ENCODE measurements at regions of chr11 and their contacts with region 1.

Region 1: DNA sequence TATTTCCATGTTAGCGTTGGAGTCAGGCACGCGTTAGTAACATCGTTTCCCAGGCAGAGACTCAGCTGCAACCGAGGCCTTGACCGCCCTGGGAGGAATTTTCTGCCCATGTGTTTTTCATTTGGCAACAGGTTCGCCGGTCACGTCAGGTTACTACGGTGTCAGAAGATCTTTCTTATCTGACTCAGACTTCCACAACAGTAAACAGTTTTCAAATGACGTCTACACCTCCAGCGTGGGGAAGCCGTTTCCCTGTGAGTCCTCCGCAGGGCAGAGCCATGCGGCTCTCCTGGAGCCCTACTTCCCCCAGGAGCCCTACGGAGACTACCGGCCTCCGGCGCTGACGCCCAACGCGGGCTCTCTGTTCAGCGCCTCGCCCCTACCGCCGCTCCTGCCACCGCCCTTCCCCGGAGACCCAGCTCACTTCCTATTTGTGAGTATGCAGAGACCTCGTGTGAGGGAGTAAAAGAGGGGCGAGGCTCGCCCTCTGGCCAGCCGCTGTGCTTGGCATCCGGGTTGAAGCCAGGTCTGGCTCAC is 14.3 kb upstream of the POU2AF3 start:
- DNase-seq: no peak
- H3K4me3 Mint-ChIP-seq: no peak overlapping the region
- H3K27ac Mint-ChIP-seq: no peak overlapping the region
- H3K4me1 Mint-ChIP-seq: no peaks in the 10 kb centered on the region
- H3K27me3 Mint-ChIP-seq: no peaks in the 10 kb centered on the region

Region 2: DNA sequence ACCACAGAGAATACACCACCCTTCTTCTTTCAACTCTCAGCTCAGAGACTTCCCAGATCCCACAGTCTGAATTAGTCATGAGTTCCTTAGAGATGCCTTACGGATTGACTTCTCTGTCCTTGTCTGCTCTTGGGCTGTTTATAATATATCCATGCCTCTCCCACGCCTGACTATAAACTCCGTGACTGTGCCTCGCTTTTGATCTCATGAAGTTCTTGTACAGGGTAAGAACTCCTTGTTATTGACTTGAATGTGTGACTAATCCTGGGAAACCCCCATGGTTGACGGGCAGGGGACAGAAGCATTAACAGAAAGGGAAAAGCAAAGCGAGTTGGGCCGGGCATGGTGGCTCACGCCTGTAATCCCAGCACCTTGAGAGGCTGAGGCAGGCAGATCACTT is 157.4 kb after region 1 on chr11:
- CTCF ChIA-PET with region 1: interaction called, 47 read pairs
- DNase-seq: no peak
- H3K4me3 Mint-ChIP-seq: no peak overlapping the region
- H3K27ac Mint-ChIP-seq: no peak overlapping the region
- H3K4me1 Mint-ChIP-seq: peaks cover 25% of the 10 kb centered on the region
- H3K27me3 Mint-ChIP-seq: no peaks in the 10 kb centered on the region

Region 3: GRCh38 chr11:111446404-111447111 is 162.5 kb after region 1 on chr11:
- CTCF ChIA-PET with region 1: interaction called, 47 read pairs
- DNase-seq: peak; percentile 88
- H3K4me3 Mint-ChIP-seq: no peak overlapping the region
- H3K27ac Mint-ChIP-seq: peak overlapping the region; percentile 76
- H3K4me1 Mint-ChIP-seq: peaks cover 18% of the 10 kb centered on the region
- H3K27me3 Mint-ChIP-seq: peaks cover 3% of the 10 kb centered on the region